ENCODE measurements at regions of chr14 and their contacts with region 1.

Region 1: GRCh38 chr14:81990312-81990761 is 456.7 kb upstream of the SEL1L start:
- DNase-seq: peak in 1 of 2 experiments; percentile 75
- H3K4me3 ChIP-seq: no peak overlapping the region
- H3K27ac ChIP-seq: no peak overlapping the region
- H3K4me1 ChIP-seq: no peaks in the 10 kb centered on the region
- H3K27me3 ChIP-seq: no peaks in the 10 kb centered on the region
- CTCF ChIP-seq: peak in 2 of 3 experiments; percentile 81 to 85; a peak in 3 of 4 replicates
- EP300 ChIP-seq: no peak
- POLR2A ChIP-seq: no peak
- RAD21 ChIP-seq: peak; percentile 95 to 96

Region 2: DNA sequence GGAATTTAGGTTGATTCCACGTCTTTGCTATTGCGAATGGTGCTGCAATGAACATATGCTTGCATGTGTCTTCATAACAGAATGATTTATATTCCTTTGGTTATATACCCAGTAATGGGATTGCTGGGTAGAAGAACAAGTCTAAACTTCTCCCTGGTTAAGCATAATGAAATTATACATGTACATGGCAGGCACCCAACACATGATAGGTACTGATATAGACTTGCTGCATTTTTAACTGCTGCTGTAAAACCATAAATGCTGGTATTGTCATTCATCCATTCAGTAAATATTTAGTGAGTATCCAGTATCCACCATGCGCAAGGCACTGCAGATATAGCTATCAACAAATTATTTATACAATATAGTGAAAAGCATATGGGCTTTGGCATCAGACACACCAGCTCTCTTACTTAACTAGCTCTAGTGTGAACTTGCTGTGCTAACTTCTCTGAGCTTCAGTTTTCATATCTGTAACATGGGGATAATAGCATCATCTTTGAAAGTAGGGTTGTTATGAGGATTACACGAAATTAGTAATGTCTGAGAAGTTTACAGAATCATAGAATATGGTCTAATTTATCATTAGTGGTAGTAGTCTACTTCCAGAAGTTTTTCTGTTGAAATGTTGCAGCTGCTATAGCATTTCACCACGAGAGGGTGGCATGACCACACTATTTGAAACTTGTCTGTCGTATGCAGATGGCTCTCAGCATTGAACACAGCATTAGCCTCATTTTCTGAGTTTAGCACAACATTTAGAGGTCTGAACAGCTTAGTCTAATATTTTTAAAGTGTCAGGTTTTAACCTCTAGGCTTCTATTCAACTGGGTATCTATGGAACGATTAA is 424.7 kb before region 1 on chr14:
- CTCF ChIA-PET with region 1: interaction called, 20 read pairs
- POLR2A ChIA-PET with region 1: no interaction called
- DNase-seq: no peak
- H3K4me3 ChIP-seq: no peak overlapping the region
- H3K27ac ChIP-seq: no peak overlapping the region
- H3K4me1 ChIP-seq: peaks cover 3 to 18% (median 7%) of the 10 kb centered on the region in 4 experiments; a peak in 5 of 7 replicates
- H3K27me3 ChIP-seq: peaks cover 0 to 3% (median 0%) of the 10 kb centered on the region in 4 experiments; a peak in 1 of 7 replicates
- CTCF ChIP-seq: peak in 2 of 3 experiments; percentile 67 to 76; a peak in 3 of 4 replicates
- EP300 ChIP-seq: no peak
- POLR2A ChIP-seq: no peak
- RAD21 ChIP-seq: peak; percentile 91

Region 3: GRCh38 chr14:81710234-81710845 is 280.0 kb before region 1 on chr14:
- CTCF ChIA-PET with region 1: interaction called, 29 read pairs
- POLR2A ChIA-PET with region 1: no interaction called
- DNase-seq: no peak
- H3K4me3 ChIP-seq: no peak overlapping the region
- H3K27ac ChIP-seq: no peak overlapping the region
- H3K4me1 ChIP-seq: no peaks in the 10 kb centered on the region
- H3K27me3 ChIP-seq: no peaks in the 10 kb centered on the region
- CTCF ChIP-seq: peak in 2 of 3 experiments; percentile 53 to 82; a peak in 2 of 4 replicates
- EP300 ChIP-seq: no peak
- POLR2A ChIP-seq: no peak
- RAD21 ChIP-seq: peak; percentile 88 to 93

Region 4: DNA sequence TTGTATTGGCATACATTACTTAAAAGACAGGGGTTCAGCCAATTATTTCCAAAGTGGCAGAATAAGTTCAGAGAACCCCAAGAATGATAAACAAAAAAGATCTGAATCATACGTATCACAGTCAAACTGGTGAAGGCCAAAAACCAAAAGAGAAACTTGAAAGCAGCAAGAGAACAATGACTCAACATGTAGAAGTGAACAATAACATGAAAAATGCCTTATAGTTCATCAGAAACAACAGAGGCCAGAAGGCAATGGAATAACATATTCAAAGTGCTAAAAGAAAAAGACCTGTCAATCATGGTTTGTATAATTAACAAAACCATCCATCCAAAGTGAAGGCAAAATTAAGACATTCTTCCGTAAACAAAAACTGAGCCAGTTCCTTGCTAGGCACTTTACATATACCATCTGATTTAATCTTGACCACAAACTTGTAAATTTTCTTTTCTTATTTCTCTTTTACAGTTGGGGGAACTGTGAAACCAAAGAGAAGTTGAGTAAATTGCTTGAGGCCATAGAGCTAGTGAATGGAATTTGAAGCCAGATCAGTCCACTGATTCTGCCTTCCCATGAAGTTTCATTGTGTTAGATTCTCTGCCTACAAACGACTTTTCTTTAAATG is 224.6 kb before region 1 on chr14:
- CTCF ChIA-PET with region 1: no interaction called
- POLR2A ChIA-PET with region 1: no interaction called
- DNase-seq: no peak
- H3K4me3 ChIP-seq: no peak overlapping the region
- H3K27ac ChIP-seq: no peak overlapping the region
- H3K4me1 ChIP-seq: no peaks in the 10 kb centered on the region
- H3K27me3 ChIP-seq: no peaks in the 10 kb centered on the region
- CTCF ChIP-seq: no peak
- EP300 ChIP-seq: no peak
- POLR2A ChIP-seq: no peak
- RAD21 ChIP-seq: no peak

Region 5: GRCh38 chr14:81927070-81927469 is 63.3 kb before region 1 on chr14:
- CTCF ChIA-PET with region 1: interaction called, 10 read pairs
- POLR2A ChIA-PET with region 1: no interaction called
- DNase-seq: no peak
- H3K4me3 ChIP-seq: no peak overlapping the region
- H3K27ac ChIP-seq: no peak overlapping the region
- H3K4me1 ChIP-seq: no peaks in the 10 kb centered on the region
- H3K27me3 ChIP-seq: no peaks in the 10 kb centered on the region
- CTCF ChIP-seq: peak in 2 of 3 experiments; percentile 18 to 61; a peak in 2 of 4 replicates
- EP300 ChIP-seq: no peak
- POLR2A ChIP-seq: no peak
- RAD21 ChIP-seq: peak; percentile 61 to 67

Region 6: DNA sequence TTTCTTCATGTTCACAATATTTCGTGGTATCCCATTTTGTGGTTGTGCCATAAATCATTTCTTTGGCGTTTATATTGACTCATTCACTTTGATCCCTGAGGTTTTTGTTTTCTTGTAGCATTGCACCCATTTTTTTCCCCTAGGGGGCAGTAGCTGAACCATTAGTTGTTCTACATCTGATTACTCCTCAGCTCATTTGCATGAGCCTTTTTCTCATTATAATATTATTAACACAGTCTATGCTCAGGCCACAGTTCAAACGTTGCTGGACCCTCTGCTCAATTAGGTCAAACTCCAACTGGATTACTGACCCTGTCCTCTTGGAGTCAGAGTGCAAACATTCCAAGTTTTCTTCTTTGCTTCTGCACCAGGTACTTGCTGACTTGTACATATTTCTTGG is 18.7 kb after region 1 on chr14:
- CTCF ChIA-PET with region 1: interaction called, 61 read pairs
- POLR2A ChIA-PET with region 1: no interaction called
- DNase-seq: no peak
- H3K4me3 ChIP-seq: no peak overlapping the region
- H3K27ac ChIP-seq: no peak overlapping the region
- H3K4me1 ChIP-seq: no peaks in the 10 kb centered on the region
- H3K27me3 ChIP-seq: no peaks in the 10 kb centered on the region
- CTCF ChIP-seq: peak in 2 of 3 experiments; percentile 36 to 60; a peak in 2 of 4 replicates
- EP300 ChIP-seq: no peak
- POLR2A ChIP-seq: no peak
- RAD21 ChIP-seq: peak; percentile 68 to 71